ENCODE measurements at regions of chr5 and their contacts with region 1.

Region 1: GRCh38 chr5:150350524-150351344 is 6.8 kb upstream of the TCOF1 start:
- DNase-seq: peak; percentile 62 to 83
- H3K4me3 ChIP-seq: no peak overlapping the region
- H3K27ac ChIP-seq: no peak overlapping the region
- H3K4me1 ChIP-seq: peaks cover 0 to 6% (median 0%) of the 10 kb centered on the region in 4 experiments; a peak in 4 of 7 replicates
- H3K27me3 ChIP-seq: no peaks in the 10 kb centered on the region
- CTCF ChIP-seq: peak; percentile 81 to 94 (median 90)
- EP300 ChIP-seq: no peak
- POLR2A ChIP-seq: no peak
- RAD21 ChIP-seq: peak; percentile 96 to 98

Region 2: DNA sequence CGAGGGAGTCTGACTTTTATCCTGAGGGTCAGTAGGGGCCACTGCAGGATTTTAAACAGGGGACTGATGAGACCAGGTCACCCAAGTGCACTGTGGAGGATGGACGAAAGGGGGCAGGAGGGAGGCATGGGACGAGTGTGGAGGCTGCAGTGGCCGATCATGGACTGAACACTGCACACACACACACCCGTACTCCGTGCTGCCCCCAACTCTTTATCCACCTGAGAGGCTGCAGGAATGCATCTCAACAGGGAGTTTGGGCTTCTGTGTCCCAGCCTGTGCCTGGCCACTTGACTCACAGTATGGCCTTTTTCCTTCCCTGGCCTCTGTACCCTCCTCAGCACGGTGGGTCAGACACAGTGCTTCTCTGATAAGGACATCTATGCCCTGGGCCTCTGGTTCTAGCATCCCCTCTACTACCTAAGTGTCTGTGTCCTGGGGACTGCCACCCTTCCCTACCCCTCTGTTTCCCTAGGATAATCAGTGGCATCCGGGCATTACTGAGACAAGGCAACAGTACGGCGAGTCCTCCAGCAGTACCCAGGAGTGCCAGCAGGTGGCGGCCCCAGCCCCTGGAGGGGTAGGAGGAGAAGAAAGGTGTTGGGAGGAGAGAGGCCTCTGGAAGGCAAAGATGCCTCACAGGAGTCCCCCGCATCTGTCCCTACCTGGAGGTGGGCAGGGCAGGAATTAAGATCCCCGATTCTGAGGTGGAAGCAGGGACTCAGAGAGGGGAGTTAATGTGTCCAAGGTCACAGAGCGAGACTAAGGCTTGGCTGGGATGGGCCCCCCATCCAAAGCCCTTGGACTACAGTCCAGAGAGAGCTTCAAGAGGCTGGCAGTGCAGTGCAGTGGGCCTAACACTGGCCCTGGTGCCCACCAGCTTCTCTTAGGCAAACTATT is 189.2 kb before region 1 on chr5:
- CTCF ChIA-PET with region 1: interaction called, 12 read pairs
- POLR2A ChIA-PET with region 1: no interaction called
- DNase-seq: peak in 1 of 2 experiments; percentile 100
- H3K4me3 ChIP-seq: peak overlapping the region in 1 of 4 experiments; percentile 10; a peak in 1 of 8 replicates
- H3K27ac ChIP-seq: no peak overlapping the region
- H3K4me1 ChIP-seq: peaks cover 3 to 10% (median 6%) of the 10 kb centered on the region in 4 experiments
- H3K27me3 ChIP-seq: peaks cover 21 to 31% (median 26%) of the 10 kb centered on the region in 4 experiments
- CTCF ChIP-seq: peak in 2 of 3 experiments; percentile 92 to 99; a peak in 3 of 4 replicates
- EP300 ChIP-seq: no peak
- POLR2A ChIP-seq: no peak
- RAD21 ChIP-seq: peak; percentile 90 to 93

Region 3: DNA sequence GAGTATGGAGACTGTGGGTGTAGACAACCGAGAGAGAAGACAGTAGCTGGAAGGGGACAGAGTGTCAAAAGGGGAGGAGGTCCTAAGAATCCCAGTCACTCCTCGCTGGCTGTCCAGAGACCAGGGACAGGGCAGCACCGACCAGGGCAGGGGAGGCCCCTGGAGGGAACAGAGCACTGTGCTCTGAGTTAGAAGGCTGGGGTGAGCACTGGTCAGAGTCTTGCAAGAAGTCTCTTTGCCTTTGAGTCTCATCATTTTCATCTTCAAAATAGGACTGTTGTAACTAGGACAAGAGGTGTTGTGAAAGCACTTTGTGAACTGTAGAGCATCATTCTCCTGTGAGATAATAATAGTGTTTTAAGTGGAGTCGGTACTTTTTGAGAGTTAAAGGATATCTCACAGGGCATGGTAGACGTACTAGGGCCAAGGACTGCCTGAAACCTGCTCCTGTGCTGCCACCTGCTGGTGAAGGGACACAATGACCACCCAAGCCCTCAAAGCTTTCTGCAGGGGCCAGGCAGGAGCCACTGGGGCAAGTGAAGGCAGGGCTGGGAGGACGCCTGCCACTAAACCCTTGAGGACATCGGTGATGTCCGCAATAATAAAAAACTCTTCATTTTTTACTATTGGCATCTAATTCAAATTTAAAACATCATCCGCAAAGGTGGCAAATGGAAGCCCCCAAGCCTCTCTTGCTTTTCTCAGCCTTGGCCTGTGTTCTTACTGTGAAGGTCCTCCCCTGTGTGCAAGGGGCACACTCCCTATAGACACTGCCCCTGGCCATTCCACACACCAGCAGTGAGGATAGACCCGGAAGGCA is 132.7 kb before region 1 on chr5:
- CTCF ChIA-PET with region 1: interaction called, 12 read pairs
- POLR2A ChIA-PET with region 1: interaction called, 4 read pairs
- DNase-seq: peak; percentile 61 to 92
- H3K4me3 ChIP-seq: no peak overlapping the region
- H3K27ac ChIP-seq: no peak overlapping the region
- H3K4me1 ChIP-seq: 0 out of 7 replicates have a peak, but pooled peaks cover 0 to 3% (median 0%) of the 10 kb centered on the region in 4 experiments
- H3K27me3 ChIP-seq: peaks cover 0 to 6% (median 4%) of the 10 kb centered on the region in 4 experiments; a peak in 3 of 7 replicates
- CTCF ChIP-seq: peak in 2 of 3 experiments; percentile 89 to 95; a peak in 3 of 4 replicates
- EP300 ChIP-seq: no peak
- POLR2A ChIP-seq: no peak
- RAD21 ChIP-seq: peak; percentile 97 to 98

Region 4: GRCh38 chr5:150256410-150257064 is 94.2 kb before region 1 on chr5:
- CTCF ChIA-PET with region 1: interaction called, 23 read pairs
- POLR2A ChIA-PET with region 1: no interaction called
- DNase-seq: peak in 1 of 2 experiments; percentile 64
- H3K4me3 ChIP-seq: no peak overlapping the region
- H3K27ac ChIP-seq: no peak overlapping the region
- H3K4me1 ChIP-seq: peaks cover 0 to 3% (median 1%) of the 10 kb centered on the region in 4 experiments; a peak in 3 of 7 replicates
- H3K27me3 ChIP-seq: no peaks in the 10 kb centered on the region; a peak in 2 of 7 replicates
- CTCF ChIP-seq: peak; percentile 72 to 82 (median 75)
- EP300 ChIP-seq: no peak
- POLR2A ChIP-seq: no peak
- RAD21 ChIP-seq: peak; percentile 72 to 82

Region 5: GRCh38 chr5:150302301-150303069 is 48.2 kb before region 1 on chr5 and contains the start of gene ARSI:
- CTCF ChIA-PET with region 1: interaction called, 62 read pairs
- POLR2A ChIA-PET with region 1: interaction called, 5 read pairs
- DNase-seq: peak in 1 of 2 experiments; percentile 86
- H3K4me3 ChIP-seq: peak within 1 kb of the TSS; percentile 41 to 67 (median 55)
- H3K27ac ChIP-seq: no peak within 1 kb of the TSS
- H3K4me1 ChIP-seq: peaks cover 9 to 23% (median 14%) of the 10 kb centered on the region in 4 experiments
- H3K27me3 ChIP-seq: peaks cover 0 to 12% (median 7%) of the 10 kb centered on the region in 4 experiments; a peak in 5 of 7 replicates
- CTCF ChIP-seq: peak in 2 of 3 experiments; percentile 33 to 50; a peak in 3 of 4 replicates
- EP300 ChIP-seq: no peak
- POLR2A ChIP-seq: no peak
- RAD21 ChIP-seq: peak in 1 of 2 experiments; percentile 8; a peak in 1 of 4 replicates
- total RNA-seq, gene ARSI: 4.5 TPM in 2 replicates

Region 6: DNA sequence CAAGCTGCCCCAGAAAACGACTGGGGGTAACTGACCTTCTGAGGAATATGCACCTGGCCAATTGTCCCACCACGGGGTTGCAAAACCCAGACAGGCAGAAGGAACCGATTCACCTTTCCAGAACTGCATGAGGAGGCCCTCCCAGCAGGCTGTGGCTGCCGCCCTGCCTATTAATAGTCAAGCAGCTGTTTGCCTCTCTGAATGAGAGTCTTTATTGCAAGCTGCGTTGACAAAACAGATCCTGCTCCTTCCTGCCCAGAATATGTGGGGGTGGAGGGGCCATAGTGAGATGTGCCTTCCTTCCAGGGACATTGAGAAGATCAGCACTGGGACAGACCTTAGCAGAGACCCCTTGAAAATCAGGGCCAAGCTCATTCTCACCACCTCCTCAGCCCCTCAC is 11.6 kb before region 1 on chr5:
- CTCF ChIA-PET with region 1: interaction called, 126 read pairs
- POLR2A ChIA-PET with region 1: no interaction called
- DNase-seq: no peak
- H3K4me3 ChIP-seq: no peak overlapping the region
- H3K27ac ChIP-seq: no peak overlapping the region
- H3K4me1 ChIP-seq: peaks cover 0 to 2% (median 0%) of the 10 kb centered on the region in 4 experiments; a peak in 1 of 7 replicates
- H3K27me3 ChIP-seq: no peaks in the 10 kb centered on the region
- CTCF ChIP-seq: no peak
- EP300 ChIP-seq: no peak
- POLR2A ChIP-seq: no peak
- RAD21 ChIP-seq: no peak

Region 7: GRCh38 chr5:150363185-150363584 is 12.5 kb after region 1 on chr5:
- CTCF ChIA-PET with region 1: interaction called, 20 read pairs
- POLR2A ChIA-PET with region 1: interaction called, 7 read pairs
- DNase-seq: no peak
- H3K4me3 ChIP-seq: no peak overlapping the region
- H3K27ac ChIP-seq: no peak overlapping the region
- H3K4me1 ChIP-seq: peaks cover 0 to 4% (median 0%) of the 10 kb centered on the region in 4 experiments; a peak in 2 of 7 replicates
- H3K27me3 ChIP-seq: no peaks in the 10 kb centered on the region
- CTCF ChIP-seq: no peak
- EP300 ChIP-seq: no peak
- POLR2A ChIP-seq: no peak
- RAD21 ChIP-seq: no peak

Region 8: DNA sequence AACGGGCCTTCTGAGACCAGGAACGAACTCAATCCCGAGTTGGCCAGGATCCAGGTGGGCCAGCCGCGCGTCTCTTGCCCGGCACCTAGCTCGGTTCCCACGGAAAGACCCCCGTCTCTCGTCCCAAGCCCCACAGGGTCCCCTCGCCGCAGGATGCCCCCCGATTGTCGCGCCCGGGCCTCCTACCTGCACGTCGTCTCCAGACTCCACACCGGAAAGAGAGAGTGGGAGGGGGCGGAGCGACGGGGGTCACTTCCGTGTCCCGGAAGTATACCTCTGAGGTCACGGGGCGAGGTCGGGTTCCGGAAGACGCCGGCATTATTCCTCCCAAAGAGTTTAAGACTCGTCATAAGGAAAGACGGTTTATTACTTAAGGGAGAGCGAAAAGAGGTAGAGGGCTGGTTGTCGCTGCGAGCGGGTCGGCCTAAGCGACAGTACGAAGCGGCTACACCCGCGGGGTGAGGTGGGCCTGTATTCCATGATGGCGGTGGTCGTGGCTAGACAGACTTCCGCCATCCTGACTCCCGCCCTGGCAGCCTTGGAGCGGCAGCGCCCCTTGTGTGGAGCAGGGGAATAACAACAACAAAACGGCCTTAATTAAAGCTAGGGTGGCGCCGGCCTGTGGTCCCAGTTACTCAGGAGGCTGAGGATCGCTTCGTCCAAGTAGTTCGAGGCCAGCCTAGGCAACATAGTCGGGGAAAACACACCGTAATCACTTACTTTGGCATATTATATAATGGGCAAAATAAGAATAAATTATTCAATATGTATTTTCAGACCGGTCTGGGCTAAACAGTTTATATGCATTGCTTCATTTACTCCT is 99.0 kb after region 1 on chr5 and contains the start of gene RPS14:
- CTCF ChIA-PET with region 1: no interaction called
- POLR2A ChIA-PET with region 1: no interaction called
- DNase-seq: peak; percentile 77 to 96
- H3K4me3 ChIP-seq: peak within 1 kb of the TSS; percentile 97 to 100 (median 98)
- H3K27ac ChIP-seq: peak within 1 kb of the TSS; percentile 99
- H3K4me1 ChIP-seq: peaks cover 0 to 15% (median 8%) of the 10 kb centered on the region in 4 experiments; a peak in 6 of 7 replicates
- H3K27me3 ChIP-seq: no peaks in the 10 kb centered on the region
- CTCF ChIP-seq: peak; percentile 78 to 93 (median 85)
- EP300 ChIP-seq: peak in 1 of 2 experiments; percentile 21; a peak in 1 of 3 replicates
- POLR2A ChIP-seq: peak; percentile 90 to 98
- RAD21 ChIP-seq: peak; percentile 33 to 46; a peak in 3 of 4 replicates
- total RNA-seq, gene RPS14: 2,548 and 2,599 TPM in 2 replicates